ENCODE measurements at regions of chr11 and their contacts with region 1.

Region 1: GRCh38 chr11:22169833-22170232 is 23.1 kb upstream of the ANO5 start:
- DNase-seq: no peak
- H3K4me3 ChIP-seq: no peak overlapping the region
- H3K27ac ChIP-seq: no peak overlapping the region
- H3K4me1 ChIP-seq: no peaks in the 10 kb centered on the region
- H3K27me3 ChIP-seq: no peaks in the 10 kb centered on the region
- CTCF ChIP-seq: peak in 2 of 3 experiments; percentile 7 to 17; a peak in 2 of 4 replicates
- EP300 ChIP-seq: no peak
- POLR2A ChIP-seq: no peak
- RAD21 ChIP-seq: peak in 1 of 2 experiments; percentile 41; a peak in 3 of 4 replicates

Region 2: GRCh38 chr11:22106566-22106965 is 63.3 kb before region 1 on chr11:
- CTCF ChIA-PET with region 1: no interaction called
- POLR2A ChIA-PET with region 1: no interaction called
- DNase-seq: no peak
- H3K4me3 ChIP-seq: no peak overlapping the region
- H3K27ac ChIP-seq: no peak overlapping the region
- H3K4me1 ChIP-seq: no peaks in the 10 kb centered on the region
- H3K27me3 ChIP-seq: no peaks in the 10 kb centered on the region
- CTCF ChIP-seq: no peak
- EP300 ChIP-seq: no peak
- POLR2A ChIP-seq: no peak
- RAD21 ChIP-seq: no peak

Region 3: DNA sequence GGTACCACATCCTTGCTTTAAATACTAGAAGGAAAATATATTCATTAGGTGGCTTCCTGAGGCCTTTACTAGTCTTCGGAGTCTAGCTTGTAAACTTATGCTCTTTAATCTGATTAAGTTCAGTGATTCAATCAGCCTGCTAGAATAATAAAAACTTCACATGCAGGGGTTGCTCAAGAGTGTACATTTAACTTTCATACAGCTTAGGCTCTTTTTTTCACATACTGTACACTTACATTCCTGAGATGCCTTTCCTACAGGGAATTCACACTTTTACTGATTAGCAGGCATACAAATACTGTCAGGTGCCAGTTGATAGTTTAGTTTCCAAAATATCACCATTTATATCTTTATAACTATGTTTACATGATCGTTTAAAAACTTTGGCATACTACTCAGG is 19.8 kb after region 1 on chr11:
- CTCF ChIA-PET with region 1: interaction called, 11 read pairs
- POLR2A ChIA-PET with region 1: no interaction called
- DNase-seq: no peak
- H3K4me3 ChIP-seq: no peak overlapping the region
- H3K27ac ChIP-seq: no peak overlapping the region
- H3K4me1 ChIP-seq: peaks cover 0 to 5% (median 2%) of the 10 kb centered on the region in 4 experiments; a peak in 2 of 7 replicates
- H3K27me3 ChIP-seq: no peaks in the 10 kb centered on the region
- CTCF ChIP-seq: no peak
- EP300 ChIP-seq: no peak
- POLR2A ChIP-seq: no peak
- RAD21 ChIP-seq: no peak

Measured in H1 (cell line).